ENCODE measurements at regions of chr11 and their contacts with region 1.

Region 1: GRCh38 chr11:124402326-124402922 is 3.6 kb upstream of the OR8B3 start:
- DNase-seq: peak; percentile 40 to 75
- H3K4me3 ChIP-seq: no peak overlapping the region
- H3K27ac ChIP-seq: no peak overlapping the region
- H3K4me1 ChIP-seq: no peaks in the 10 kb centered on the region
- H3K27me3 ChIP-seq: no peaks in the 10 kb centered on the region
- CTCF ChIP-seq: peak; percentile 79

Region 2: GRCh38 chr11:125874556-125875124 is 1472.2 kb after region 1 on chr11:
- CTCF ChIA-PET with region 1: no interaction called
- POLR2A ChIA-PET with region 1: no interaction called
- intact Hi-C with region 1: loop called (anchors 5 kb)
- DNase-seq: peak; percentile 26 to 48
- H3K4me3 ChIP-seq: no peak overlapping the region
- H3K27ac ChIP-seq: no peak overlapping the region
- H3K4me1 ChIP-seq: no peaks in the 10 kb centered on the region
- H3K27me3 ChIP-seq: no peaks in the 10 kb centered on the region; the same call in 1 of the 2 replicates
- CTCF ChIP-seq: peak; percentile 78